ENCODE measurements at regions of chr14 and their contacts with region 1.

Region 1: DNA sequence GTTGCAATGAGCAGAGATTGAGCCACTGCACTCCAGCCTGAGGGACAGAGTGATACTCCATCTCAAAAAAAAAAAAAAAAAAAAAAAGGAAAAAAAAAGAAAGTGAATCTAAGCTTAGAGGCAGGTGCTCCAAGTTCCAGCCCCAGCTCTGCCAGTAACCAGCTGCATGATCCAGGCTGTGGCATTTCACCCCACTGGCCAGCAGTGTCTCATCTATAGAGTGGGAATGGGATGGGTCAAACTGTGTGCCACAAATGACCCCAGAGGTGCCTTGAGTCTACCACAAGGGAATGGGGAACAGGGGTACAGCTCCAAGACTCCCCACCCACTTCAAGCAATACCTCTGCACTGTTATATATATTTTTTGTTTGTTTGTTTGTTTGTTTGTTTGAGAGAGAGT is 5.0 kb downstream of the PLEKHD1 start:
- DNase-seq: no peak
- CTCF ChIP-seq: no peak

Region 2: DNA sequence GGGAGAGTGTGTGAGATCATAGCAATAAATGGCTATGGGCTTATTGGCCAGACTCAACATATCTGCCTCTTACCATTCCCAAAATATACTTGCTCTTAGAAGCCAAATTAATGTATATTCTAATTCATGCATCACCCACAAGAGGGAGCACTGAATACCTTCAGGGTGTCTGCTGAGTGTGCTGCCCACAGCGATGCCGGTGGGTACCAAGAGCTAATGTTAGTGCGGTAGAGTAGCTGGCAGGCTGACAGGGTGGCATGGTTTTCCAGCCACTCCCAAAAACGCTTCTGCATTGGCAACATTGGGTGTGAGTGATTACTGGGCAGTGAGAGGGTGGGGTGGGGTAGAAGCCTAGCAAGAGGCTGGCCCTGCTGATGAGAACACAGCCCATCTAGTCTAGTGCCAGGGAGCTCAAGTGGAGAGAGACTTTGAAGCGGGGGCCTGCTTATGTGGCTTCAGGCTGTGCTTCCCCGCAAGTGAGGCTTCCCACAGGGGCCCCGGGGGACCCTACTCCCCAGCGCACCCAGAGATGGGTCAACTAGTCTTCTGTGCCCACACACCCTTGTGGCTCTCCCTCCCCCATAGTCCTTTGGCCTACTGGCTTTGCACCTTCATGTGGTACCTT is 14.2 kb before region 1 on chr14:
- CTCF ChIA-PET with region 1: interaction called, 15 read pairs
- POLR2A ChIA-PET with region 1: no interaction called
- DNase-seq: peak; percentile 47
- CTCF ChIP-seq: peak; percentile 15

Region 3: GRCh38 chr14:69501423-69501838 is 11.9 kb after region 1 on chr14:
- CTCF ChIA-PET with region 1: interaction called, 17 read pairs
- POLR2A ChIA-PET with region 1: no interaction called
- DNase-seq: no peak
- CTCF ChIP-seq: no peak

Measured in GM10248 (cell line).